ENCODE measurements at regions of chr7 and their contacts with region 1.

Region 1: GRCh38 chr7:112449902-112450806 is at the start of gene IFRD1:
- DNase-seq: peak; percentile 98
- H3K4me3 Mint-ChIP-seq: peak within 1 kb of the TSS; percentile 89
- H3K27ac Mint-ChIP-seq: peak within 1 kb of the TSS; percentile 96
- H3K4me1 Mint-ChIP-seq: peaks cover 27% of the 10 kb centered on the region
- H3K27me3 Mint-ChIP-seq: no peaks in the 10 kb centered on the region
- CTCF ChIP-seq: no peak
- total RNA-seq, gene IFRD1: 38.8 and 44.6 TPM in 2 replicates

Region 2: GRCh38 chr7:112390167-112390566 is 60.0 kb before region 1 on chr7:
- CTCF ChIA-PET with region 1: interaction called, 4 read pairs
- intact Hi-C with region 1: loop called (anchors 5 kb)
- DNase-seq: no peak
- H3K4me3 Mint-ChIP-seq: no peak overlapping the region
- H3K27ac Mint-ChIP-seq: no peak overlapping the region
- H3K4me1 Mint-ChIP-seq: peaks cover 19% of the 10 kb centered on the region
- H3K27me3 Mint-ChIP-seq: peaks cover under 1% of the 10 kb centered on the region
- CTCF ChIP-seq: no peak

Region 3: DNA sequence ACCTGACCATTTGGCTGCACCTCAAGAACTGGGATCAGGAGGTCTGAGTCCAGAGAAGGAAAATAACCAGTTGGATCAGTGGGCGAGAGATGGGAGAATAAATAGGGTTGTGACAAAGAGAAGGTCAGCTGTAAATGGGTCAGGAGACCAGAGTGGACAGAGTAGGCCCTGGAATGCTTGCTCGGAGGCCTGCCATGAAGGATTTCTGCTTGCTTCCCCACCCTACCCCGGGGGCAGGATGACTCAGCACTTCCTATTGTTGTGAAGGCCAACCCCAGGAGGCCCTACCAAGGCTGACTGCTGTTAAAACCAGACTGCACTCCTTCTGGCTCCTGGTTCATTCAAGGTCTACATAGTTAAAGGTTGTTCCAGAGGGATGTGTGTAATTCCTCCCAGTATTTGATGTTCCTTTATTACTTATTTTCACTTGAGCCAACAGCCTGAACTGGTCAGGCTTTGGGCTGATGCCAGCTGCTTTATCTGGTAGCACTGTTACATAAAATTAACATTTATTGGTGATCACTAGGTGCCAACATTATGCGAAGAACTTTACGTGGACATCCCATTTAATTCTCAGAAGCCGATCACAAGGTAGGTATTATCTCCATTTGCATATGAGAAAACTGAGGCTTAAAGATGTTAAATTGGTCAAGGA is 27.2 kb before region 1 on chr7:
- CTCF ChIA-PET with region 1: interaction called, 4 read pairs
- intact Hi-C with region 1: loop called (anchors 2 kb)
- DNase-seq: peak; percentile 85
- H3K4me3 Mint-ChIP-seq: no peak overlapping the region
- H3K27ac Mint-ChIP-seq: peak overlapping the region; percentile 77
- H3K4me1 Mint-ChIP-seq: peaks cover 25% of the 10 kb centered on the region
- H3K27me3 Mint-ChIP-seq: no peaks in the 10 kb centered on the region
- CTCF ChIP-seq: no peak

Region 4: DNA sequence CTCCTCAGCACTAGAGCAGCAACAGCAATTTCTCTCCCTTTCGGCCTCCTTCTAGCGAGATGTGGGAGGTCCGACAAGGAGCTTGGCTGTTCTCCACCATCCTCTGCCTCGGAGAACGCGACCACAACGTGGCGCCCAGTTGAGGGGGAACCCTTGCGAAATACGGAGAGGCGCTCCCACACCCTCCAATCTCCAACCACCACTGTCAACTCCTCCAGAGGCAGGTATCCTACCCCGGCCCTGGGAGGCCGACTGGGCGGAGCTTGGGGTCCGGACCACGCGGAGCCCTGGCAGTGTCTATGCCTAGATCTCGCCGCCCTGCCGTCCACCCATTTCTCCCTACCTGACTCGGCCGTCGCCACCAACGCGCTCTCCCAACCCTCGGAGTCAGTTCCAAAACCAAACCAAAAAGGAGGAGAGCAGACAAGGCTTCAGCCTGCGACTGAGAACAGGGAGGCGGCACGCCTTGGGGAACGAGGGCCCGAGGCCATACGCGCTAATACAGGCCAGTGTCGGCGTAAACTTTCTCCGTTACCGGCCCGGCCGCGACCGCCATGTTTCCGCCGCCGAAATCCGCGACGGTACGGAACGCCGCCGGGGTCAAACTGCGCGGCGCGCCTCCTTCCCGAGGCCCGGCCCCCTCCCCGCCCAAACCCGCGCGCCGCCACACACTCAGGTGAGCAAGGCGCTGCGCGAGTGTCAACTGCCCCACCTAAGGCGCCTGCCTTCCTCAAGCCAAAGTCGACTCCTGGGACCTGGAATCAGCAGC is 339.8 kb after region 1 on chr7 and contains the start of gene TMEM168:
- CTCF ChIA-PET with region 1: no interaction called
- intact Hi-C with region 1: loop called (anchors 10 kb)
- DNase-seq: peak; percentile 88
- H3K4me3 Mint-ChIP-seq: peak within 1 kb of the TSS; percentile 89
- H3K27ac Mint-ChIP-seq: peak within 1 kb of the TSS; percentile 81
- H3K4me1 Mint-ChIP-seq: peaks cover 38% of the 10 kb centered on the region
- H3K27me3 Mint-ChIP-seq: no peaks in the 10 kb centered on the region
- CTCF ChIP-seq: no peak
- total RNA-seq, gene TMEM168: 16.9 and 20.6 TPM in 2 replicates